Gastrocnemius medialis (tissue), 4 donors: ENCODE measurements at regions of chr7 and their contacts with region 1.

Region 1: DNA sequence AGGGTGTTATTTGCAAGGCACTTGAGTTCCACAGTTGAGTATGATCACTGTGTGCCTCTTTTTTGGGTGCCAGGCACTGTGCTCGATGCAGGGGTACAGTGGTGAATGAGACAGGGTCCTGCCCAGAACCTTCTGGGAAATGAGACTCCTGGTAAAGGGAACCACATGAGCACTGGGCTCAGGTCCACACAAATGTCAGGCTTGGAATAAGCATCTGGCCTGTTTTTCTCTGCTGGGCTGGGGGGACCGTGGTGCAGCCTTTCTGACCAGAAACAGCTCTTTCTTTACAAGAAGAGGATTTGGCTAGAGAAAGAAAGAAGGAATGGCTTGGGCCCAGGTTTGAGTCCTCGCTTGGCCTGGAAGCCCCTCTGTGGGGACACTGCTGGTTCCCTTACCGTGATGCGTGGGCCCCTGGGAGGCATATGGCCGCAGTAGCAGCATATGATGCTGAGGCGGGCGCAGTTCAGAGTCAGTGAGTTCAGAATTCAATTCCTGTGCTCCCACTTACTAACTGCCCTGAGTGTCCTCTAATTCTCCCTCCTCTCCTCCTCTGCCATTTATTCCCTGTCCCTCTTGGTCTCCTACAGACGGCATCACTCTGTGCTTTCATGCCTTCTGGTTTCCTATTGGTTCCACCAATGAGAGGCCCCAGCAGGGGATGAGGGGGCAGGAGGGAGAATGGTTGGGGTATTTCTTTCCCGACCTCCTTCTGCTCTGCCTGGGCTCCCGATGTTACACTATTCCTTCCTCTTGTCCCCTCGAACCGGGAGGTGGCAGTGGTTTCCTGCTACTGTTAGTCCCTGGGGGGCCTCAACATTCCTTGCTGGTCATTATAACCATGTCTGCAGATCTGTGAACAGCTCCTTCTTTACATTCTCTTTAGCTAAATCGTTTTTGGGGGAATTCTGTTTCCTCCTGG is 9.6 kb upstream of the KCP start:
- DNase-seq: no peak
- ATAC-seq: no peak
- H3K4me3 ChIP-seq: no peak overlapping the region
- H3K27ac ChIP-seq: no peak overlapping the region
- H3K4me1 ChIP-seq: peaks cover 0 to 7% of the 10 kb centered on the region in 2 donors
- H3K27me3 ChIP-seq: peaks cover 12 to 23% (median 15%) of the 10 kb centered on the region in 3 donors
- CTCF ChIP-seq: no peak
- POLR2A ChIP-seq: no peak

Region 2: GRCh38 chr7:128796327-128796726 is 123.8 kb before region 1 on chr7:
- in situ Hi-C with region 1: no loop called
- intact Hi-C with region 1: no loop called
- DNase-seq: no peak
- ATAC-seq: peak; percentile 56 to 79
- H3K4me3 ChIP-seq: no peak overlapping the region
- H3K27ac ChIP-seq: peak overlapping the region; percentile 55 to 76 (median 66)
- H3K4me1 ChIP-seq: peaks cover 22 to 25% of the 10 kb centered on the region in 2 donors
- H3K27me3 ChIP-seq: no peaks in the 10 kb centered on the region
- CTCF ChIP-seq: no peak
- POLR2A ChIP-seq: no peak

Region 3: GRCh38 chr7:128863433-128863989 is 56.6 kb before region 1 on chr7:
- in situ Hi-C with region 1: no loop called
- intact Hi-C with region 1: no loop called
- DNase-seq: no peak
- ATAC-seq: peak in 1 of 2 donors; percentile 1
- H3K4me3 ChIP-seq: peak overlapping the region; percentile 72 to 88 (median 79)
- H3K27ac ChIP-seq: peak overlapping the region; percentile 82 to 91 (median 84)
- H3K4me1 ChIP-seq: peaks cover 35 to 45% of the 10 kb centered on the region in 2 donors
- H3K27me3 ChIP-seq: no peaks in the 10 kb centered on the region
- CTCF ChIP-seq: peak in 4 of 5 experiments; percentile 8 to 56 (median 34)
- POLR2A ChIP-seq: no peak

Region 4: GRCh38 chr7:128937647-128938543 is 17.8 kb after region 1 on chr7 and contains the start of gene IRF5:
- in situ Hi-C with region 1: no loop called
- intact Hi-C with region 1: loop called (anchors 1 kb)
- DNase-seq: no peak
- ATAC-seq: no peak
- H3K4me3 ChIP-seq: peak within 1 kb of the TSS; percentile 43 to 53 (median 50)
- H3K27ac ChIP-seq: no peak within 1 kb of the TSS
- H3K4me1 ChIP-seq: peaks cover 4 to 5% of the 10 kb centered on the region in 2 donors
- H3K27me3 ChIP-seq: peaks cover 22 to 36% (median 32%) of the 10 kb centered on the region in 3 donors
- CTCF ChIP-seq: no peak
- POLR2A ChIP-seq: no peak
- total RNA-seq, gene IRF5: 0.27 to 3.8 (median 2.8) TPM

Region 5: DNA sequence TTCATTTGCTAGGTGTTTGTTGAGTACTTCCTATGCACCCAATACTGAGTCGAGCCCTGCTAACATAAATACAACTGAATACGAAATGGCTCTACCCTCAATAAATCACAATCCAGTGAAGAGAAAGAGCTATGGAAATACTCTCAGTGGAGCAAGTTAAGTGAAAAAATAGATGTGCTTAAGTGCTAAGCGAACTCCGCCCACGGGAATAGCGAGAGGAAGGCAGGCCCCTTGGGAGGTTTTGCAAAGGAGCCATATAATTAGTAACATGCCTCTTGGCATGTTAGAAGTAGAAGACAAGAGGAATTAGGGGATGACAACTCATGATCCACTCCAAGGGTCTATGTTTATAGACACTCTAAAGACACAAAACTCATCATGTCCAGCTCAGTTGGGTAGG is 181.6 kb after region 1 on chr7:
- in situ Hi-C with region 1: loop called in 1 of 4 experiments (anchors 10 kb)
- intact Hi-C with region 1: no loop called
- DNase-seq: no peak
- ATAC-seq: no peak
- H3K4me3 ChIP-seq: no peak overlapping the region
- H3K27ac ChIP-seq: no peak overlapping the region
- H3K4me1 ChIP-seq: peaks cover 7 to 18% of the 10 kb centered on the region in 2 donors
- H3K27me3 ChIP-seq: no peaks in the 10 kb centered on the region
- CTCF ChIP-seq: no peak
- POLR2A ChIP-seq: no peak

Region 6: GRCh38 chr7:129144095-129144833 is 224.1 kb after region 1 on chr7 and contains the start of gene TSPAN33:
- in situ Hi-C with region 1: no loop called
- intact Hi-C with region 1: no loop called
- DNase-seq: peak; percentile 59 to 66
- ATAC-seq: peak; percentile 92 to 95
- H3K4me3 ChIP-seq: peak within 1 kb of the TSS; percentile 40 to 69 (median 60)
- H3K27ac ChIP-seq: no peak within 1 kb of the TSS
- H3K4me1 ChIP-seq: peaks cover 7 to 13% of the 10 kb centered on the region in 2 donors
- H3K27me3 ChIP-seq: peaks cover 0 to 13% (median 7%) of the 10 kb centered on the region in 3 donors
- CTCF ChIP-seq: no peak
- POLR2A ChIP-seq: no peak
- total RNA-seq, gene TSPAN33: 5.6 to 9.1 (median 7.8) TPM